GM12878 (cell line): ENCODE measurements at regions of chr11 and their contacts with region 1.

Region 1: DNA sequence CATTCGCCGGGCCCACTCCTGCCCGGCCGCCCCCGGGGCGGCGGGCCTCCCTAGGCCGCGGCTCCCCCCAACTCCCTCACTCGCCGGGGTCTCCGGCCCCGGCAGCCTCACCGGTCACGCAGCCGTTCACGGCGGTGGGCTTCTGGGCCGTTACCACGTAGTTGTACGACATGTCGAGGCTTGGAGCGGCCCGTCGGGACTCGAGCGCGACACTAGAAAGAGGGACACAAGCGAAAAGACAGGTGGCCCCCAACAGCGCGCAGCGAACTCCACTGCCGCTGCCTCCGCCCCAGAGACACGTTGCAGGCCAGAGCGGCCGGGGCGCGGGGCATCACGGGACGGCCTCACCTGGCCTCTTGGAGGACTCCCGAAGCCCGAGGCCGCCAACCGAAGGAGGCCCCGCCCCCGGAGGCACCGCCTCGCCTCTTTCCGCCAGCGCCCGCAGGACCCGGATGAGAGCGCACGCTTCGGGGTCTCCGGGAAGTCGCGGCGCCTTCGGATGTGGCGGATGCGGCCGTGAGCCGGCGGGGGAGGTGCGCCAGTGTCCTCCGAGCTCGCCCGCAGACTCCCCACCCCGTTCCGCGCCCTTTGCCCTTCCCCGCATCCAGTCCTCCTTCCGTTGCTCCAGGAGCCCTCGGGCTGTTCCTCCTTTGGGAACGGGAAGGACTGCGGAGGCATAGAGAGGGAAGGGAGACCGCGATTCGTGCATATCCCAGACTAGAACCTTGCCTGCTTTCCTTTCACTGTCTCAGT is at the starts of genes DDB1 and TKFC:
- DNase-seq: peak; percentile 64
- ATAC-seq: peak; percentile 94
- H3K4me3 ChIP-seq: peak within 1 kb of the TSS; percentile 90
- H3K27ac ChIP-seq: peak within 1 kb of the TSS; percentile 92
- H3K4me1 ChIP-seq: peaks cover 20% of the 10 kb centered on the region
- H3K27me3 ChIP-seq: no peaks in the 10 kb centered on the region
- CTCF ChIP-seq: no peak
- EP300 ChIP-seq: no peak
- POLR2A ChIP-seq: peak; percentile 98
- RAD21 ChIP-seq: no peak
- polyA plus RNA-seq, gene DDB1: 136 to 211 TPM
- polyA plus RNA-seq, gene TKFC: 2.4 to 5.5 TPM

Region 2: DNA sequence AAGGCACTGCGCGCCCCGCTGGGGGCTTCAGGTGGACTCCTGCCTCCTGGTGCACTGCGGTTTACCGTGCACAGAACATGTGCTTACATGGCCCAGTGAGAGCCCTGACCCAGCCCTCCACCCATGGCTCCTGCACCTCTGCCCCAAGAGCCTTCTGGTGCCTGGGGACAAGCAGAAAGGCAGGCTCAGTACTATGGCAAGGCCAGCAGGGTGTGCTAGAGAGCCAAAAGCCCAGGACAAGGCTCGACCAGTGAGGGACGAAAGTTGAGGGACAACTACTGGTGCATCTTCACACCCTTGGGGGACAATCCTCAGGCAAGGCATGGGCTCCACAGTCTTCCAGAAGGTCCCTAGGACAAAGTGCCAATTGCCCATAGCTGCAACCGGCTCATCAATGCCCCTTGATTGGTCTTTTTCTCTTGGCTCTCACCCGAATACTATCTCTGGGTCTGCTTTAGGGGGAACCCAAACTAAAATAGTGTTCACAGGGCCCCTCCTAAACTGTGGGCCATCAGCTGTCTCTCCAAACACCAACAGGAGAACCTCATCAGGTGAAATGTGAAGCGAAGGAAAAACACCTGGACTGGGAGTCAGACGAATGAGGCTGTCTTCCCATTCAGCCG is 78.5 kb before region 1 on chr11:
- CTCF ChIA-PET with region 1: interaction called, 41 read pairs
- POLR2A ChIA-PET with region 1: interaction called, 4 read pairs
- RAD21 ChIA-PET with region 1: interaction called, 6 read pairs
- SMC1A ChIA-PET with region 1: interaction called, 9 read pairs
- in situ Hi-C with region 1: no loop called
- intact Hi-C with region 1: loop called (anchors 10 kb)
- DNase-seq: peak; percentile 25
- ATAC-seq: peak; percentile 99
- H3K4me3 ChIP-seq: no peak overlapping the region
- H3K27ac ChIP-seq: no peak overlapping the region
- H3K4me1 ChIP-seq: no peaks in the 10 kb centered on the region
- H3K27me3 ChIP-seq: no peaks in the 10 kb centered on the region
- CTCF ChIP-seq: peak; percentile 93 to 99 (median 96)
- EP300 ChIP-seq: no peak
- POLR2A ChIP-seq: no peak
- RAD21 ChIP-seq: peak; percentile 84

Region 3: GRCh38 chr11:61361686-61362541 is 28.9 kb after region 1 on chr11 and contains the starts of genes CYB561A3 and TMEM138:
- CTCF ChIA-PET with region 1: interaction called, 387 read pairs
- POLR2A ChIA-PET with region 1: interaction called, 32 read pairs
- RAD21 ChIA-PET with region 1: interaction called, 172 read pairs
- SMC1A ChIA-PET with region 1: interaction called, 243 read pairs
- in situ Hi-C with region 1: no loop called
- intact Hi-C with region 1: loop called (anchors 1 kb)
- DNase-seq: peak; percentile 85
- ATAC-seq: peak; percentile 88
- H3K4me3 ChIP-seq: peak within 1 kb of the TSS; percentile 99
- H3K27ac ChIP-seq: peak within 1 kb of the TSS; percentile 98
- H3K4me1 ChIP-seq: peaks cover 29% of the 10 kb centered on the region
- H3K27me3 ChIP-seq: no peaks in the 10 kb centered on the region
- CTCF ChIP-seq: no peak
- EP300 ChIP-seq: peak; percentile 16 to 39; a peak in 1 of 4 replicates
- POLR2A ChIP-seq: peak; percentile 94
- RAD21 ChIP-seq: no peak
- polyA plus RNA-seq, gene CYB561A3: 40.1 to 53.5 TPM
- polyA plus RNA-seq, gene TMEM138: 64.2 to 87.2 TPM

Region 4: DNA sequence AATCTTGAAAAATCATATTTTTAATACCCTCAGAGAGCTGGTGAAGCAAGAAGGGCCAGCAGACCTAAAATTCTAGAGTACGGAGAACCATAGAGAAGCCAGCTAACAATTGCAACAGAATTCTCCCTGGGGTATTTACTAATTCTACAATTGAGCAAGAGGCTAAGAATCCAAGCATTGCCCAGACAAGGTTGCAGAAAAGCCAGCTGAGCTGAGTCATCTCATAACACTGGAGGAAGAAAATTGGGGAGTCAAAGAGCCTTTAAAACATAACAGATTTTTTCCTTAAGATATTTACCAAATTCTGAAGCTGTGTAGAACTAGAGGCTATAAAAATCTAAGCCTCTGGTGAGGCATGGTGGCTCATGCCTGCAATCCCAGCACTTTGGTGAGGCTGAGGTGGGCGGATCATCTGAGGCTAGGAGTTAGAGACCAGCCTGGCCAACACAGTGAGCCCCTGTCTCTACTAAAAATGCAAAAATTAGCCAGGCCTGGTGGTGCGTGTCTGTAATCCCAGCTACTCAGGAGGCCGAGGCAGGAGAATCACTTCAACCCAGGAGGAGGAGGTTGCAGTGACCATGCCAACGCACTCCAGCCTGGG is 45.8 kb after region 1 on chr11:
- CTCF ChIA-PET with region 1: interaction called, 729 read pairs
- POLR2A ChIA-PET with region 1: interaction called, 86 read pairs
- RAD21 ChIA-PET with region 1: interaction called, 424 read pairs
- SMC1A ChIA-PET with region 1: interaction called, 414 read pairs
- in situ Hi-C with region 1: no loop called
- intact Hi-C with region 1: no loop called
- DNase-seq: no peak
- ATAC-seq: no peak
- H3K4me3 ChIP-seq: no peak overlapping the region
- H3K27ac ChIP-seq: no peak overlapping the region
- H3K4me1 ChIP-seq: no peaks in the 10 kb centered on the region
- H3K27me3 ChIP-seq: no peaks in the 10 kb centered on the region
- CTCF ChIP-seq: no peak
- EP300 ChIP-seq: no peak
- POLR2A ChIP-seq: no peak
- RAD21 ChIP-seq: no peak

Region 5: DNA sequence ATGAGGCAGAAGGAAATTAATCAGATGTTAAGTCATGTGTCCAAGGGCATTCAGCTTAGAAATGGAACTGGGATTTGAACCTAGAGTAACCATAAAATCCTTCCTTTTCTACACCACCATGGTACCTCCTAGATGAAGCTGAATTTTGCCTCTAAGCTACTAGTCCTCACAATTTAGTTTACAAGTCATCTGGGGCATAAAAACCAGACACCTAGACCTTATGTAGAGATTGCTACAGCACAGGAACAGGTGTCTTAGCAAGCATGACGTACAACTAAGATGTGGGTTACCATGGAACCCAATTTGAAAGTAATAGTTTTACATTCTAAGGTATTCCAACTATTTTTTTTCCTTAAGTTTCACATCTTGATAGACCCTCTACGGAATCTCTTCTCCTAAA is 68.6 kb after region 1 on chr11:
- CTCF ChIA-PET with region 1: interaction called, 19 read pairs
- POLR2A ChIA-PET with region 1: interaction called, 3 read pairs
- RAD21 ChIA-PET with region 1: interaction called, 4 read pairs
- SMC1A ChIA-PET with region 1: interaction called, 80 read pairs
- in situ Hi-C with region 1: no loop called
- intact Hi-C with region 1: no loop called
- DNase-seq: no peak
- ATAC-seq: no peak
- H3K4me3 ChIP-seq: no peak overlapping the region
- H3K27ac ChIP-seq: no peak overlapping the region
- H3K4me1 ChIP-seq: no peaks in the 10 kb centered on the region
- H3K27me3 ChIP-seq: no peaks in the 10 kb centered on the region
- CTCF ChIP-seq: no peak
- EP300 ChIP-seq: no peak
- POLR2A ChIP-seq: no peak; the same call in 1 of the 2 replicates
- RAD21 ChIP-seq: no peak

Region 6: GRCh38 chr11:61439615-61440014 is 106.6 kb after region 1 on chr11:
- CTCF ChIA-PET with region 1: interaction called, 51 read pairs
- POLR2A ChIA-PET with region 1: interaction called, 4 read pairs
- RAD21 ChIA-PET with region 1: interaction called, 20 read pairs
- SMC1A ChIA-PET with region 1: interaction called, 19 read pairs
- in situ Hi-C with region 1: no loop called
- intact Hi-C with region 1: loop called (anchors 5 kb)
- DNase-seq: no peak
- ATAC-seq: no peak
- H3K4me3 ChIP-seq: no peak overlapping the region
- H3K27ac ChIP-seq: no peak overlapping the region
- H3K4me1 ChIP-seq: no peaks in the 10 kb centered on the region
- H3K27me3 ChIP-seq: no peaks in the 10 kb centered on the region
- CTCF ChIP-seq: no peak
- EP300 ChIP-seq: no peak
- POLR2A ChIP-seq: no peak
- RAD21 ChIP-seq: no peak